ENCODE measurements at regions of chr11 and their contacts with region 1.

Region 1: DNA sequence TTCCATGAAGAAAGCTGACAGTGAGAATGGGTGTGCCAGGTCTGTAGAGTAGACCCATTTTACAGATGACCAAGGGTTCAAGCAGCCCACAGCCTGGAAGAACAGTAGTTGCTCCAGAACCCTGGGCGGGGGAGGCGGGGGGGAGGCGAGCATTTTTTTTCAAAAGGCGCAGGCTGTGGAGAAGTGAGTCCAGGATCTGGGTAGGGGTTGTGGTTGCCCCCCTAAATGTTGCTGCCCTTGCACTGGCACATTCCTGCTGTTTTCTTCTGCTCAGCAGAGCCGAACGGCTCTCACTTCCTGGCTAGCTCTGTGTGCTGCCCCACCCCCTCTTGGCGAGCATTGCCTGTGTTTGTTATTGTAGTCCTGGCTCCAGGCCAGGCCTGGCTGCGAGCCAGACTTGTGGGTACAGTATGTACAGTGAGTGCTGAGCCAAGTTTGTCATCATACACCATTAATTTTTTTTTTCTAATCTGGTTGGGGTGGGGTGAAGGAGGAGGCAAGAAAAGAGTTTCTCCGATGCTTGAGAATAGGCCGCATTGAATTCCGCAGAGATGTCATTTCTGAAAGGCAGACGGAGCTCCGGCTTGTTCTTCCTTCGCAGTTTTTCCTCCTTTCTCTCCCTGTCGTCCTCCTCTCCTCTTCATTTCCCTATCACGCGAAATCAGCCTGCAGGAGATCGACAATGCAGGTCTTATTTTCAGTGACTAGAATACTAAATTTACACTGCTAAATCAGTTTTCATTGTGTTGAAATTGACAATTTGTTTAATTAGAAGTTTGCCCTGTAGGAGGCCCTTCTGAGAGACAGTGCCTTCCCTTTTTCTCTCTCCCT is 100.5 kb downstream of the ZBTB16 start:
- DNase-seq: peak; percentile 98
- ATAC-seq: peak; percentile 93
- H3K4me3 ChIP-seq: peak overlapping the region; percentile 11 to 44 (median 24)
- H3K4me3 Mint-ChIP-seq: peak overlapping the region; percentile 73
- H3K27ac ChIP-seq: peak overlapping the region; percentile 81 to 85
- H3K27ac Mint-ChIP-seq: peak overlapping the region; percentile 90
- H3K4me1 ChIP-seq: peaks cover 68 to 69% of the 10 kb centered on the region in 2 donors
- H3K4me1 Mint-ChIP-seq: peaks cover 73% of the 10 kb centered on the region
- H3K27me3 ChIP-seq: no peaks in the 10 kb centered on the region
- H3K27me3 Mint-ChIP-seq: peaks cover 4% of the 10 kb centered on the region
- CTCF ChIP-seq: peak; percentile 33

Region 2: GRCh38 chr11:113839842-113840241 is 320.2 kb before region 1 on chr11:
- CTCF ChIA-PET with region 1: no interaction called
- POLR2A ChIA-PET with region 1: no interaction called
- intact Hi-C with region 1: loop called (anchors 1 kb)
- DNase-seq: peak; percentile 85
- ATAC-seq: peak; percentile 93
- H3K4me3 ChIP-seq: peak overlapping the region in 1 of 5 experiments; percentile 52
- H3K4me3 Mint-ChIP-seq: peak overlapping the region; percentile 78
- H3K27ac ChIP-seq: peak overlapping the region; percentile 92
- H3K27ac Mint-ChIP-seq: peak overlapping the region; percentile 94
- H3K4me1 ChIP-seq: peaks cover 39 to 43% of the 10 kb centered on the region in 2 donors
- H3K4me1 Mint-ChIP-seq: peaks cover 30% of the 10 kb centered on the region
- H3K27me3 ChIP-seq: no peaks in the 10 kb centered on the region
- H3K27me3 Mint-ChIP-seq: no peaks in the 10 kb centered on the region
- CTCF ChIP-seq: no peak

Region 3: GRCh38 chr11:113974741-113975470 is 185.1 kb before region 1 on chr11 and contains the start of gene HTR3A:
- CTCF ChIA-PET with region 1: no interaction called
- POLR2A ChIA-PET with region 1: no interaction called
- intact Hi-C with region 1: loop called (anchors 1 kb)
- DNase-seq: peak; percentile 16
- ATAC-seq: no peak
- H3K4me3 ChIP-seq: no peak within 1 kb of the TSS
- H3K4me3 Mint-ChIP-seq: peak within 1 kb of the TSS; percentile 48
- H3K27ac ChIP-seq: peak within 1 kb of the TSS in 1 of 2 donors; percentile 29
- H3K27ac Mint-ChIP-seq: peak within 1 kb of the TSS; percentile 91
- H3K4me1 ChIP-seq: peaks cover 56 to 77% of the 10 kb centered on the region in 2 donors
- H3K4me1 Mint-ChIP-seq: peaks cover 66% of the 10 kb centered on the region
- H3K27me3 ChIP-seq: no peaks in the 10 kb centered on the region
- H3K27me3 Mint-ChIP-seq: no peaks in the 10 kb centered on the region
- CTCF ChIP-seq: no peak
- total RNA-seq, gene HTR3A: 13.8 and 16.1 TPM in 2 replicates

Region 4: DNA sequence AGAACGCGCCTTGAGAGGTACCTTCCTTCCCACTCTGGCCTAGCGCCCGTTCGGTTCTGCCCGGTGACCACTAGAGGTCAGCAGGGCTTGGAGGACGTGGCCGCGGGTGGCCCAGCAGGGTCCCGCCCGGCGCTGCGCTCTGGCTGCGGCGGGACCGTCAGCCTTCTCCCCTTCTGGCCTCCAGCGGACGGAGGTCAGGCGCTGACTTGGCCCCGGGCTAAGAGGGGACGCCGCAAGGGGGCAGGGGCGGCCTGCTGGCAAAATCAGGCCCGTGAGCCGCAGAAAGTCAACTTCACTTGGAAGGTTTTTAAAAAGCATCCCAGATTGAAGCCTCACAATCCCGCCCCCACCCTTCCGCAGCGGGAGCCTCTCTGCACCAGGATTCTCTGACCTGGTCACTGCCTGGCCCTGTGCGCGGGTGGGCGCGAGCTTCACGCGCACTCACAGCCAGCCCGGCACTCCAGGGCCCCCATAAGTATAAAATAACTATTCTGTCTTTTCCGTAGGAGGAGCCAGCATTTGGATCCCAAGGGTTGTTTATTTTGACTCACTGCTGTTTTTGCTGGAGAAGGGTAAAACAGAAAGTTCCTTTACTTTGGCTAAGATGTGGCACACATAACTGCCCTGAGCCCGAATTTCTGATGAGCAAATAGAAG is 123.7 kb before region 1 on chr11:
- CTCF ChIA-PET with region 1: interaction called, 11 read pairs
- POLR2A ChIA-PET with region 1: no interaction called
- intact Hi-C with region 1: no loop called
- DNase-seq: peak; percentile 72
- ATAC-seq: peak; percentile 93
- H3K4me3 ChIP-seq: peak overlapping the region in 3 of 5 experiments; percentile 18 to 48 (median 22)
- H3K4me3 Mint-ChIP-seq: no peak overlapping the region
- H3K27ac ChIP-seq: no peak overlapping the region
- H3K27ac Mint-ChIP-seq: no peak overlapping the region
- H3K4me1 ChIP-seq: peaks cover 0 to 12% of the 10 kb centered on the region in 2 donors
- H3K4me1 Mint-ChIP-seq: peaks cover 7% of the 10 kb centered on the region
- H3K27me3 ChIP-seq: peaks cover 0 to 17% (median 4%) of the 10 kb centered on the region in 4 experiments
- H3K27me3 Mint-ChIP-seq: peaks cover 28% of the 10 kb centered on the region
- CTCF ChIP-seq: peak; percentile 69

Region 5: DNA sequence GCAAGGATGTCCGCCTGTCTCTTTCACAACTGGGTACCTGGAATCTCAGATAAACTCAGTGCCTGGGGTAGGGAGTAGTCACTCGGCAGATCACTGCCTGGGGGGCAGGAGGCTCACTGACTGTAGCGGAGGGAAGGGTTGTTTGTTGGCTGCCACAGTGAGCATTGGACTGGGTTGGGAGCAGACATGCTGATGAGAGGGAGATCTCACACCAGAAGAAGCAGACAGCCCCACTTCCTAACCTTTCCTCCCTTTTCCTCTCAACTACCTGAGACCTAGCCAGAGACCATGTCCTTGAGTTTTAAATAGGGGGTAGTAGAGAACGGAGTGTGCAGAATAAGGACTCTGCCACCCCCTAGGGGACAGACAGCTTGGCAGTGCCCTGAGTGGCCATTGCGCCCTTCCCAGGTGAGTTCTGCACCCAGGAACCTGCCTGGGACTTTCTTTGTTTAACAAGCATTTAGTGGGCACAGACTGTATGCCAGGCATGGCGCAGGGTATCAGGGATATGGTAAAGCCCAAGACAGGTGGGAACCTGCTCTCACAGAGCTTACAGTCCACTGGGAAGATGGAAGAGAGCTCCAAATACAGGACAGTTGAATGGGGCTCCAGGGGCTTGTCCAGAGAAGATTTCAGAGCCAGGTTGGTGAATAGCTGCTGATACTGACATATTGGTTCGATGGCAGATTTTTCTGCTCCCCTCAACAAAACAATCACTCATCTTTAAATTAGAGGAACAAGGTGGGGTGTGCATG is 20.5 kb after region 1 on chr11:
- CTCF ChIA-PET with region 1: interaction called, 8 read pairs
- POLR2A ChIA-PET with region 1: interaction called, 3 read pairs
- intact Hi-C with region 1: loop called (anchors 2 kb)
- DNase-seq: peak; percentile 59
- ATAC-seq: peak; percentile 59
- H3K4me3 ChIP-seq: no peak overlapping the region
- H3K4me3 Mint-ChIP-seq: peak overlapping the region; percentile 53
- H3K27ac ChIP-seq: peak overlapping the region; percentile 79 to 84
- H3K27ac Mint-ChIP-seq: peak overlapping the region; percentile 62
- H3K4me1 ChIP-seq: peaks cover 62 to 72% of the 10 kb centered on the region in 2 donors
- H3K4me1 Mint-ChIP-seq: peaks cover 69% of the 10 kb centered on the region
- H3K27me3 ChIP-seq: no peaks in the 10 kb centered on the region
- H3K27me3 Mint-ChIP-seq: peaks cover 2% of the 10 kb centered on the region
- CTCF ChIP-seq: peak; percentile 31

Region 6: GRCh38 chr11:114187173-114187572 is 27.2 kb after region 1 on chr11:
- CTCF ChIA-PET with region 1: interaction called, 8 read pairs
- POLR2A ChIA-PET with region 1: interaction called, 9 read pairs
- intact Hi-C with region 1: loop called (anchors 1 kb)
- DNase-seq: peak; percentile 84
- ATAC-seq: peak; percentile 82
- H3K4me3 ChIP-seq: peak overlapping the region in 2 of 5 experiments; percentile 10 to 17
- H3K4me3 Mint-ChIP-seq: peak overlapping the region; percentile 77
- H3K27ac ChIP-seq: peak overlapping the region; percentile 92 to 98
- H3K27ac Mint-ChIP-seq: peak overlapping the region; percentile 98
- H3K4me1 ChIP-seq: peaks cover 67 to 74% of the 10 kb centered on the region in 2 donors
- H3K4me1 Mint-ChIP-seq: peaks cover 73% of the 10 kb centered on the region
- H3K27me3 ChIP-seq: no peaks in the 10 kb centered on the region
- H3K27me3 Mint-ChIP-seq: no peaks in the 10 kb centered on the region
- CTCF ChIP-seq: no peak

Region 7: DNA sequence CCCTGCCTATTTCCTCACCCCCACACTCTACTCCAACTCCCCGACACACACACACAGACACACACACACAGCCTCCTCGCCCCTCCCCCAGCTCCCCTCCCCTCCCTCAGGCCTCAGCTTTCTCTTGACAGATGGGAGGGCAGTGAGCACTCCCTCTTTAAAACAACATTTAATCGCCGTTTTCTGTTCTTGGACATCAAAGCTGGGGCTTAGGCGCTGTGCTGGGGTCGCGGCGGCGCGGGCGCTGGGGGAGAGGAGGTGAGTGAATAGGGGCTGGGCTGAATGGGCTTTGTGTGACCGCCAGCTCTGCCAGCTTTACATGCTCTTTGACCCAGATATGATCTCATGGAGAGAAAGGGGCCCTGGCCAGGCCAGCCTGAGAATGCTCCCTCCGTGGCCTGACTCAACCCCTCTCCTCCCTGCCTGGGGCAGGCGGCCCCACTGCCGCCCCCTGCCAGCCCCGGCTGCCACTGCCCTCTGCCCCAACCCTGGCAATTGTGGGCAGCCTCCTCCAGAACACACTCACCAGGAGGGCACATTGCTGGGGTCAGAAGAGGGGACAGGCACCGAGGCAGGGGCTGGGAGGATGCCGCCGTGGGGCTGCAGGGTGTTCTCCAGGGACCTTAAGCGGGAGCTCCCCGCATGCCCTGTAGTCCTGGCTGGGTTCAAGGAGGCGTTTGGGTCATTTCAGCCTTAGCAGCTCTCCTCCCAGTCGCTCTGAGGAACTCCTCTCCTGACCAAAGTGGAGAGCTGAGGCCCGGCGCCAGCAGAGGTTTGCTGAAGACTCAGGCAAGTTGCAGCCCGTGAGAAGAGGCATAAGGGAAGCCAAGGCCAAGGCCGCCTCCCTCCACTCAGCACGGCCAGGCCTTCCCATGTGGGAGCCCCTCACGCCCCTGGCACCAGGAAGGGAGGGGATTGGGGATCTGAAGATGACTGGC is 97.9 kb after region 1 on chr11:
- CTCF ChIA-PET with region 1: interaction called, 100 read pairs
- POLR2A ChIA-PET with region 1: interaction called, 17 read pairs
- intact Hi-C with region 1: loop called (anchors 1 kb)
- DNase-seq: no peak
- ATAC-seq: no peak
- H3K4me3 ChIP-seq: no peak overlapping the region
- H3K4me3 Mint-ChIP-seq: no peak overlapping the region
- H3K27ac ChIP-seq: peak overlapping the region; percentile 84 to 89
- H3K27ac Mint-ChIP-seq: peak overlapping the region; percentile 88
- H3K4me1 ChIP-seq: peaks cover 30 to 34% of the 10 kb centered on the region in 2 donors
- H3K4me1 Mint-ChIP-seq: peaks cover 32% of the 10 kb centered on the region
- H3K27me3 ChIP-seq: peaks cover 0 to 1% (median 0%) of the 10 kb centered on the region in 4 experiments
- H3K27me3 Mint-ChIP-seq: no peaks in the 10 kb centered on the region
- CTCF ChIP-seq: no peak

Measured in B cell (primary cell).